T-cell (primary cell): ENCODE measurements at regions of chr11 and their contacts with region 1.

Region 1: GRCh38 chr11:102346748-102347461 is at the start of gene BIRC2:
- DNase-seq: peak; percentile 88 to 98 (median 94)
- ATAC-seq: peak; percentile 85 to 92 (median 90)
- H3K4me3 ChIP-seq: peak within 1 kb of the TSS; percentile 98 to 99
- H3K4me3 Mint-ChIP-seq: peak within 1 kb of the TSS; percentile 92 to 98 (median 98)
- H3K27ac ChIP-seq: peak within 1 kb of the TSS; percentile 99
- H3K27ac Mint-ChIP-seq: peak within 1 kb of the TSS; percentile 99
- H3K4me1 ChIP-seq: peaks cover 6 to 17% of the 10 kb centered on the region in 2 experiments
- H3K4me1 Mint-ChIP-seq: peaks cover 40 to 50% (median 50%) of the 10 kb centered on the region in 3 donors
- H3K27me3 ChIP-seq: no peaks in the 10 kb centered on the region
- H3K27me3 Mint-ChIP-seq: no peaks in the 10 kb centered on the region
- total RNA-seq, gene BIRC2: 53.3 to 100 (median 60.8) TPM

Region 2: GRCh38 chr11:101944923-101945322 is 402.0 kb before region 1 on chr11:
- CTCF ChIA-PET with region 1: no interaction called
- POLR2A ChIA-PET with region 1: no interaction called
- DNase-seq: no peak
- ATAC-seq: no peak
- H3K4me3 ChIP-seq: no peak overlapping the region
- H3K4me3 Mint-ChIP-seq: no peak overlapping the region
- H3K27ac ChIP-seq: no peak overlapping the region
- H3K27ac Mint-ChIP-seq: no peak overlapping the region
- H3K4me1 ChIP-seq: no peaks in the 10 kb centered on the region
- H3K4me1 Mint-ChIP-seq: no peaks in the 10 kb centered on the region
- H3K27me3 ChIP-seq: no peaks in the 10 kb centered on the region
- H3K27me3 Mint-ChIP-seq: peaks cover 0 to 9% of the 10 kb centered on the region in 2 donors

Region 3: DNA sequence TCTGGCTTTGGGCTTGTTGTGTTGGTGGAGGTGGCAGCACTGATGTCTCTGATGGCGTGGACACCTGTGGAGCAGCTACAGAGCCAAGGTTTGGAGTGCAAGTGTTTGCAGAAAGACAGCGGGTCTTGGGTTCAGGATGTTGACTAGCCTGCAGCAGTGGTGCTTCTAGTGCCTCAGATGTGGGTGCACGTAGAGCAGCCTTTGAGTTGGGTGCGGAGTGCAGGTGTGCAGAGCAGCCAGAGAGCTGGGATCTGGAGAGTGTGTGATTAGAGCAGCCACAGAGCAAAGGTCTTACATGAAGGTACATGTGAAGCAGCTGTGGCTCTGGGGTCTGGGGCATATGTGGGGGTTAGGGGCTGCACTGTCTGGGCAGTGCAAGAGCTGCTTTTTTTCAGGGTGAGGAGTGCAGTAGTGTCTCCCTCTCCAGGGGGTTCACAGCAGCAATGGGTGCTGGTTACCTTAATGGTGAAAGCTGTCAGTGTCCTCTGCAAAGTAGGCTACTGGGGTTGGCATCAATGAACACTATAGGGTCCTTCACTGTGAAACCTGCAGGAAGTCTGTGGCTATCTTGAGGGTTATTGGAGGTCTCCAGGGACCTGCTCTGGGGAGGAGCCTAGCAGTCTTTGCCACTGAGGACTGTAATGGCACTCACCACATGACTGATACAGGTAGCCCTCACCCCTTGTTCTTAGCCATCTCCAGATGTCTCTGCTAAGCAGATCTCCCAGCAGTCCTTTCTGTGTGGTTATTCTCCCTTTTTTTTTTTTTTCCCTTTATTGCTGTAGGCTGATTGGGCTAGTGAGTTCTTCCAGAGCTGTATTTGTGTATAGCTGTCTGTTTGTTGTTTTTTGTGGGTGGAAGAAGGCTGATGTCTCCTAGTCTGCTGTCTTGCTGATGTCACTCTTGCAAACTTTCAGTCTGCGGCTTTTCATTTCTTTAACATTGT is 14.5 kb after region 1 on chr11:
- CTCF ChIA-PET with region 1: interaction called, 25 to 29 read pairs
- POLR2A ChIA-PET with region 1: interaction called, 17 to 50 read pairs
- DNase-seq: peak in 34 of 35 experiments; percentile 25 to 76 (median 52)
- ATAC-seq: peak; percentile 80 to 92 (median 89)
- H3K4me3 ChIP-seq: no peak overlapping the region
- H3K4me3 Mint-ChIP-seq: peak overlapping the region; percentile 64 to 69 (median 66)
- H3K27ac ChIP-seq: peak overlapping the region; percentile 70
- H3K27ac Mint-ChIP-seq: peak overlapping the region; percentile 91 to 93
- H3K4me1 ChIP-seq: peaks cover 13 to 21% of the 10 kb centered on the region in 2 experiments
- H3K4me1 Mint-ChIP-seq: peaks cover 61 to 70% (median 68%) of the 10 kb centered on the region in 3 donors
- H3K27me3 ChIP-seq: no peaks in the 10 kb centered on the region
- H3K27me3 Mint-ChIP-seq: no peaks in the 10 kb centered on the region

Region 4: GRCh38 chr11:102430158-102430836 is 83.4 kb after region 1 on chr11:
- CTCF ChIA-PET with region 1: interaction called, 3 to 10 read pairs
- POLR2A ChIA-PET with region 1: interaction called, 3 to 12 read pairs
- DNase-seq: peak in 1 of 35 experiments; percentile 52
- ATAC-seq: peak; percentile 15 to 60 (median 57)
- H3K4me3 ChIP-seq: no peak overlapping the region
- H3K4me3 Mint-ChIP-seq: peak overlapping the region; percentile 4 to 58 (median 32)
- H3K27ac ChIP-seq: peak overlapping the region; percentile 50
- H3K27ac Mint-ChIP-seq: peak overlapping the region; percentile 52 to 90
- H3K4me1 ChIP-seq: peaks cover 22 to 42% of the 10 kb centered on the region in 2 experiments
- H3K4me1 Mint-ChIP-seq: peaks cover 68 to 75% (median 71%) of the 10 kb centered on the region in 3 donors
- H3K27me3 ChIP-seq: no peaks in the 10 kb centered on the region
- H3K27me3 Mint-ChIP-seq: no peaks in the 10 kb centered on the region